ENCODE measurements at regions of chr5 and their contacts with region 1.

Region 1: DNA sequence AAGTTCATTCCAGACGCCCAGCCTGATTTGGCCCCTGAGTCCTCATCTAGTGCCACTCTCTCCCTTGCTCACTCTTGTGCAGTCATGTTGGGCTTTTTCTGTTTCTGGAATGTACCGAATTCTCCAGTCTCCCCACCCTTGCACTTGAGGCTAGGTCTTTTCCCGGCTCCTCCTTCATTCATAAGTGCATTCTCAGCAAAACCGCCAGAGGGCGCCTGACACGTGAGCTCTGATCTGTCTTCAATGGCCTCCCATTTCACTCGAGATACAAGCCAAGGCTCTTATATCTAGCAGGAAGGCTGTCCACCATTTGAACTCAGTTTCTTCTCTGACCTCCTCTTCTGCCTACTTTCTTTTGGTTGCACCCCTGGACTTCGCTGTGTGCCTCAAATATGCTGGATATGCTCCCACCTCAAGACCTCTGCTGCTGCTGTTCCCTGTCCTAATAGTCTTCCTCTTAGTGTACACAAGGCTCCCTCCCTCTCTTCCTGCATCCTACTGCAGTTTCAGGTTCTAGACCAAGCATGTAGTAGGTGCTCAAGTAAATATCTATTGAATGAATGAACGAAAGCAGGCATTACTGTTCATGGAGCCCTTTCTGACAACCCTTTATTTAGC is 568.1 kb upstream of the WWC1 start:
- DNase-seq: peak; percentile 23 to 71 (median 58)
- H3K4me3 ChIP-seq: no peak overlapping the region
- H3K27ac ChIP-seq: no peak overlapping the region
- H3K4me1 ChIP-seq: no peaks in the 10 kb centered on the region
- H3K27me3 ChIP-seq: no peaks in the 10 kb centered on the region
- CTCF ChIP-seq: peak in 1 of 3 donors; percentile 54
- EP300 ChIP-seq: no peak
- POLR2A ChIP-seq: no peak

Region 2: GRCh38 chr5:167503926-167504720 is 219.2 kb before region 1 on chr5:
- intact Hi-C with region 1: no loop called
- DNase-seq: no peak
- H3K4me3 ChIP-seq: no peak overlapping the region
- H3K27ac ChIP-seq: no peak overlapping the region
- H3K4me1 ChIP-seq: peaks cover 8% of the 10 kb centered on the region
- H3K27me3 ChIP-seq: no peaks in the 10 kb centered on the region
- CTCF ChIP-seq: no peak
- EP300 ChIP-seq: no peak
- POLR2A ChIP-seq: no peak

Region 3: GRCh38 chr5:167565032-167565954 is 158.1 kb before region 1 on chr5:
- intact Hi-C with region 1: no loop called
- DNase-seq: no peak
- H3K4me3 ChIP-seq: no peak overlapping the region
- H3K27ac ChIP-seq: no peak overlapping the region
- H3K4me1 ChIP-seq: no peaks in the 10 kb centered on the region
- H3K27me3 ChIP-seq: no peaks in the 10 kb centered on the region
- CTCF ChIP-seq: no peak
- EP300 ChIP-seq: no peak
- POLR2A ChIP-seq: no peak

Region 4: GRCh38 chr5:168020542-168021294 is 297.4 kb after region 1 on chr5:
- intact Hi-C with region 1: loop called in 1 of 4 experiments (anchors 10 kb)
- DNase-seq: no peak
- H3K4me3 ChIP-seq: no peak overlapping the region
- H3K27ac ChIP-seq: no peak overlapping the region
- H3K4me1 ChIP-seq: peaks cover 1% of the 10 kb centered on the region
- H3K27me3 ChIP-seq: no peaks in the 10 kb centered on the region
- CTCF ChIP-seq: no peak
- EP300 ChIP-seq: no peak
- POLR2A ChIP-seq: no peak

Measured in ovary (tissue), 10 donors.